A673 (cell line): ENCODE measurements at regions of chr9 and their contacts with region 1.

Region 1: DNA sequence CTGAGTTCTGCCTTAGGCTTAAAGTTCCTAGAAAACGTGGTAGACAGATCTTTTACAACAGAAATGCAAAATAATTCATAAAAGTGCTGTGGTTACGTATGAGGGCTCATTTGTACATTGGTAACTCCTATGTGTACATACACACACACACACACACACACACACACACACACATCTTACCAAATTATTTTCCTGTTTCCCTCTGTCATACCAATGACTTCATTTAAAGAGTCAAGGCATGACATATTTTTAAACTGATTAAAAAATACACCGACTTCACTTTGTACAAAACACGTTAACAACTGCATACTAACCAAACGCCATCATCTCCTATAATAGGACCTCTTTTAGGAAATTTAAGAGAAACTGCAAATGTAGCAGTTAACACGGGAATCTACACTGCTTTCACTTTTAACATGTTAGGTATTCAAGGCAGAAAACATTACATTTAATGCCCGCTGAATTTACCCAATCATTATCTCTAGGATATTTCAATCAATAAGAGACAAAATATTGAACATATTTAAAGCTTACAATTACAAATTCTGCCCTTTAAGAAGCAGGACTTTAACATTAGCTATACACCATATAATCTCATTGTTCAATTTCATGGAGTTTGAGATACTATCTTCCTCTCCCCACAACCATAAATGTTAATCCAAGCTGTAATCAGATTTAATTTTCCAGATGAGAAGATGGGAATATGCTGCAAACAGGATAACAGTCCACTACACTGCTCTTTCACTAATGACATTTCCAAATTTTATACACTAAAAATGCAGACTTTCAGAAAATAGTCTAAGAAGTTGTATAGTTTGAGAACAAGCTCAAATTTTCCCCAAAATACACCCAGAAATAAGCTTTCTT is 133.1 kb downstream of the DENND1A start:
- DNase-seq: no peak
- H3K4me3 ChIP-seq: no peak overlapping the region
- H3K27ac ChIP-seq: no peak overlapping the region
- H3K4me1 ChIP-seq: peaks cover 5% of the 10 kb centered on the region
- H3K27me3 ChIP-seq: peaks cover 20% of the 10 kb centered on the region
- CTCF ChIP-seq: no peak

Region 2: GRCh38 chr9:123157216-123157615 is 639.6 kb before region 1 on chr9:
- CTCF ChIA-PET with region 1: no interaction called
- POLR2A ChIA-PET with region 1: no interaction called
- intact Hi-C with region 1: no loop called
- DNase-seq: no peak
- H3K4me3 ChIP-seq: no peak overlapping the region
- H3K27ac ChIP-seq: no peak overlapping the region
- H3K4me1 ChIP-seq: peaks cover 7% of the 10 kb centered on the region
- H3K27me3 ChIP-seq: no peaks in the 10 kb centered on the region
- CTCF ChIP-seq: no peak

Region 3: DNA sequence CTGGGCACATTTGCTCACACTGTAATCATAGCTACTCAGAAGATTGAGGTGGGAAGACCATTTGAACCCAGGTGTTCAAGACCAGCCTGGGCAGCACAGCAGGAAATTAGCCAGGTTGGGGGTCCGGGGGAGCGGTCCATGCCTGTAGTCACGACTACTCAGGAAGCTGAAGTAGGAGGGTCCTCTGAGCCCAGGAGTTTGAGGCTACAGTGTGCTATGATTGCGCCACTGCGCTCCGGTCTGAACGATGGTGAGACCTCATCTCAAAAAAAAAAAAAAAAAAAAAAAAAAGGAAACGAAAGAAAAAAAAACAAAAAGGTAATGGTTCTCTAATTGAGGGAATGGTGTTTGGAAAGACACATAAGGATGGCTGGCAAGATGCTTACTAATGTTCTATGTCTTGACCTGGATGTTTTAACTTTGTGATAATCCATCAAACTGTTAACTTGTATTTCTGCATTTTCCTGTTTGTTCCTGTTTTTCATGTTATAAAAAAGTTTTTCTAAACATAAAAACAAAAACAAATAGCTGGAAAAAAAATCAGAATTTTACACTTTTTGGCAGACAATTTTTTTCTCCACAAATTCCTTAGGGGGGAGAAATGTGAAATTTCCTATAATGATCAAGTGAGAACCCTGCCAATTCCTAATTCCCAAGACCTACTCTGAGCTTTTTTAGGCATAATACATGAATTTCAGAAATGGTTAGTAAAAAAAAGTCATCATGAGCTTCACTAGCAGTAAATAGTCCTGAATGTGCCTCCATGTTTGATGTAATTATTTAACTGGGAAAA is 36.2 kb after region 1 on chr9:
- CTCF ChIA-PET with region 1: no interaction called
- POLR2A ChIA-PET with region 1: no interaction called
- intact Hi-C with region 1: loop called (anchors 2 kb)
- DNase-seq: no peak
- H3K4me3 ChIP-seq: no peak overlapping the region
- H3K27ac ChIP-seq: no peak overlapping the region
- H3K4me1 ChIP-seq: no peaks in the 10 kb centered on the region
- H3K27me3 ChIP-seq: peaks cover 42% of the 10 kb centered on the region
- CTCF ChIP-seq: no peak